Activated CD8-positive, alpha-beta T cell treated with anti-CD3 and anti-CD28 coated beads for 36 hours (primary cell): ENCODE measurements at regions of chr12 and their contacts with region 1.

Region 1: DNA sequence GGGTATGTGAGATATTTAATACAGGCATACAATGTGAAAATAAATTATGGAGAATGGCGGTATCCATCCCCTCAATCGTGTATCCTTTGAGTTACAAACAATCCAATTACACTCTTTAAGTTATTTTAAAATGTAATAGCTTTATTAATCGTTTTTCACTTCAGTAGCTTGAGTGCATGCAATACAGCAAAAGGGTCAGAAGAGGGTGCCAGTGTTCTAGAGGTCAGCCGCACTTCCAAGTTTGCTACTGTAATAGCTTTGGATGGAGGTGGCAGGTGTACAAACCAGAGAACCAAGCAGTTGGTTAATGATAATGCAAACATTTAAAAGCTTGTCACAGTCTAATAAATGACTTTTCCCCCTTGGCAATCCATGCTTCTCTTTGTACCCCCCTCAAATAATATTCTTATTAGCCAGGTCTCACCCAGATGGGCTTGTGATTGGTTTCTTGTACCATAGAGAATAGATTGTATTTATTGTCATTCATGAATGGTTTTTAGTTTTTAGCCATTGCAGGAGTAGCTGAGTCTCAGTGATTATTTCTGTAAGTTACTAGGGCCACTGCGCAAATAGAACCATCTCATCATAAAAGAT is 127.0 kb downstream of the ERC1 start:
- DNase-seq: peak; percentile 87
- ATAC-seq: peak; percentile 77
- H3K4me3 Mint-ChIP-seq: no peak overlapping the region
- H3K27ac Mint-ChIP-seq: no peak overlapping the region
- H3K4me1 Mint-ChIP-seq: peaks cover 19% of the 10 kb centered on the region
- H3K27me3 Mint-ChIP-seq: no peaks in the 10 kb centered on the region
- CTCF ChIP-seq: peak; percentile 97

Region 2: GRCh38 chr12:480831-481816 is 636.9 kb before region 1 on chr12:
- CTCF ChIA-PET with region 1: no interaction called
- POLR2A ChIA-PET with region 1: no interaction called
- intact Hi-C with region 1: no loop called
- DNase-seq: no peak
- ATAC-seq: no peak
- H3K4me3 Mint-ChIP-seq: no peak overlapping the region
- H3K27ac Mint-ChIP-seq: no peak overlapping the region
- H3K4me1 Mint-ChIP-seq: no peaks in the 10 kb centered on the region
- H3K27me3 Mint-ChIP-seq: peaks cover 17% of the 10 kb centered on the region
- CTCF ChIP-seq: no peak

Region 3: GRCh38 chr12:1034751-1035457 is 83.2 kb before region 1 on chr12:
- CTCF ChIA-PET with region 1: no interaction called
- POLR2A ChIA-PET with region 1: no interaction called
- intact Hi-C with region 1: no loop called
- DNase-seq: no peak
- ATAC-seq: no peak
- H3K4me3 Mint-ChIP-seq: no peak overlapping the region
- H3K27ac Mint-ChIP-seq: no peak overlapping the region
- H3K4me1 Mint-ChIP-seq: peaks cover 4% of the 10 kb centered on the region
- H3K27me3 Mint-ChIP-seq: no peaks in the 10 kb centered on the region
- CTCF ChIP-seq: no peak

Region 4: GRCh38 chr12:1102791-1103450 is 15.1 kb before region 1 on chr12:
- CTCF ChIA-PET with region 1: interaction called, 35 read pairs
- POLR2A ChIA-PET with region 1: no interaction called
- intact Hi-C with region 1: no loop called
- DNase-seq: no peak
- ATAC-seq: no peak
- H3K4me3 Mint-ChIP-seq: no peak overlapping the region
- H3K27ac Mint-ChIP-seq: no peak overlapping the region
- H3K4me1 Mint-ChIP-seq: peaks cover 47% of the 10 kb centered on the region
- H3K27me3 Mint-ChIP-seq: no peaks in the 10 kb centered on the region
- CTCF ChIP-seq: no peak

Region 5: GRCh38 chr12:1162081-1162760 is 44.2 kb after region 1 on chr12:
- CTCF ChIA-PET with region 1: interaction called, 12 read pairs
- POLR2A ChIA-PET with region 1: no interaction called
- intact Hi-C with region 1: no loop called
- DNase-seq: no peak
- ATAC-seq: no peak
- H3K4me3 Mint-ChIP-seq: no peak overlapping the region
- H3K27ac Mint-ChIP-seq: no peak overlapping the region
- H3K4me1 Mint-ChIP-seq: no peaks in the 10 kb centered on the region
- H3K27me3 Mint-ChIP-seq: no peaks in the 10 kb centered on the region
- CTCF ChIP-seq: no peak

Region 6: DNA sequence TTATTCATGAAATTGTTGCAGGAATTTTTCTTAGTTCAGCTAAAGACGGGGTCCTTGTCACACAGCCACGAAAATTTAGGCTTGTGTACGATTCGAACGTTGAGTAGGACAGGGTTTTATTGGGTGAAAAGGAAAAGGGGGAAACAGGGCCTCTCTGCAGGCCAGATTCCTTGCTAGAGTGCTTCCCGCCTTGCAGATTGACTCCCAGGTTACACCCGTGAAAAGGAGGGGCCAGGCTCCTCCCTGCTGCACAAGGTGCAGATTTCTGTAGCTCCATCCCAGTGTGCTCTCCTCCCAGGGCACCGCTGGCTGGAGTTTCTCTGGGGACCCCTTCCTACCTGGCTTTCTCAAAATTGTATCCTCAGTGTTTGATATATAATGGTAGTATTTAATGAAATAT is 94.5 kb after region 1 on chr12:
- CTCF ChIA-PET with region 1: interaction called, 12 read pairs
- POLR2A ChIA-PET with region 1: no interaction called
- intact Hi-C with region 1: no loop called
- DNase-seq: no peak
- ATAC-seq: no peak
- H3K4me3 Mint-ChIP-seq: no peak overlapping the region
- H3K27ac Mint-ChIP-seq: no peak overlapping the region
- H3K4me1 Mint-ChIP-seq: peaks cover 5% of the 10 kb centered on the region
- H3K27me3 Mint-ChIP-seq: no peaks in the 10 kb centered on the region
- CTCF ChIP-seq: no peak

Region 7: GRCh38 chr12:1559676-1560091 is 441.6 kb after region 1 on chr12:
- CTCF ChIA-PET with region 1: interaction called, 20 read pairs
- POLR2A ChIA-PET with region 1: no interaction called
- intact Hi-C with region 1: no loop called
- DNase-seq: no peak
- ATAC-seq: no peak
- H3K4me3 Mint-ChIP-seq: no peak overlapping the region
- H3K27ac Mint-ChIP-seq: no peak overlapping the region
- H3K4me1 Mint-ChIP-seq: peaks cover 3% of the 10 kb centered on the region
- H3K27me3 Mint-ChIP-seq: peaks cover 6% of the 10 kb centered on the region
- CTCF ChIP-seq: no peak

Region 8: DNA sequence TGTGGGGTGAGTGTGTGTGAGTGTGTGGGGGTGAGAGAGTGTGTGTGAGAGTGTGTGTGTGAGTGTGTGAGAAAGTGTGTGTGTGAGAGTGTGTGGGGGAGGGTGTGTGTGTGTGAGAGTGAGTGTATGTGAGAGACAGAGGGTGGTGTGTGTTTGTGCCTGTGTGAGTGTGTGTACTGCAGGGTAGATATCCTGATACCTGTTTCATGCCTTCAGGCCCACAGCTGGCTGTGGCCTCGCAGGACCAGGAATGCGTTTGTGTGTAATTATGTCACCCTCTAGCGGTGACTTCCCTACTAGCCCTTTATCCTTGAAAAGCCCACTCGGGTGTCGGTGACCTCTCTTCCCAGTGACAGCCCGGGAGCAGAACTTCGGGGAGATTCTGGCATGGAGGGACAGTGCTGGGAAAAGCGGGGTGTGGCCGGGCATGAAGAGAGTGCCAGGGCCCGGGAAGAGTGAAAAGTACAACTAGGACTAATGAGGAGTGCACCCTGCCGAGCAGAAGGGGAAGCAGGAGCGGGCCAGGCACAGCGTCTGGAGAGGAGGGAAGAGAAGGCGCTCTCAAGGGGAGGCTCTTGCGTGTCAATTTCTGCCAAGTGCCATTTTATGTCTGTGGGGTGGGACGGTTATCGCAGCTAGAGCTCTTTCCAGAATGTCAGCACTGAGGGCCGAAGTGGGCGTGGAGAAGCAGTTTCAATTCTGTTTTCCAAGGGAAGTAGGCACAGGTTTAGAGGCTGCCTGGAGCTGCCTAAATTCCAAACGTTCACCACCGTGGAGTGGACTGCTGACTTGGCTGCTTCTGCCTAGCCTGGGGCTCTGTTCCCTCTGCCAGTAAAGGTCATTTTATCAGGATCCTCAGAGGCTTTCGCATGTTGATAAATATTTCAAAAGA is 487.3 kb after region 1 on chr12:
- CTCF ChIA-PET with region 1: interaction called, 38 read pairs
- POLR2A ChIA-PET with region 1: no interaction called
- intact Hi-C with region 1: no loop called
- DNase-seq: peak; percentile 67
- ATAC-seq: peak; percentile 68
- H3K4me3 Mint-ChIP-seq: peak overlapping the region; percentile 68
- H3K27ac Mint-ChIP-seq: peak overlapping the region; percentile 73
- H3K4me1 Mint-ChIP-seq: peaks cover 33% of the 10 kb centered on the region
- H3K27me3 Mint-ChIP-seq: peaks cover 1% of the 10 kb centered on the region
- CTCF ChIP-seq: peak; percentile 83